GM12878 (cell line): ENCODE measurements at regions of chr14 and their contacts with region 1.

Region 1: GRCh38 chr14:68816262-68816942 is 23.5 kb upstream of the ZFP36L1 start:
- DNase-seq: no peak
- ATAC-seq: peak; percentile 64
- H3K4me3 ChIP-seq: peak overlapping the region; percentile 58
- H3K27ac ChIP-seq: peak overlapping the region; percentile 95
- H3K4me1 ChIP-seq: peaks cover 58% of the 10 kb centered on the region
- H3K27me3 ChIP-seq: no peaks in the 10 kb centered on the region
- CTCF ChIP-seq: peak; percentile 89 to 99 (median 92); a peak in 5 of 6 replicates
- EP300 ChIP-seq: 0 out of 4 replicates have a peak, but pooled peaks of 1 of the 2 experiments have one; percentile 12
- POLR2A ChIP-seq: peak; percentile 80
- RAD21 ChIP-seq: peak; percentile 92

Region 2: GRCh38 chr14:68261092-68261842 is 555.1 kb before region 1 on chr14:
- CTCF ChIA-PET with region 1: interaction called, 3 read pairs
- POLR2A ChIA-PET with region 1: no interaction called
- RAD21 ChIA-PET with region 1: interaction called, 292 read pairs
- SMC1A ChIA-PET with region 1: interaction called, 314 read pairs
- in situ Hi-C with region 1: no loop called
- intact Hi-C with region 1: no loop called
- DNase-seq: no peak
- ATAC-seq: peak; percentile 60
- H3K4me3 ChIP-seq: peak overlapping the region; percentile 40; the same call in 1 of the 2 replicates
- H3K27ac ChIP-seq: peak overlapping the region; percentile 58
- H3K4me1 ChIP-seq: peaks cover 45% of the 10 kb centered on the region
- H3K27me3 ChIP-seq: no peaks in the 10 kb centered on the region
- CTCF ChIP-seq: no peak
- EP300 ChIP-seq: no peak
- POLR2A ChIP-seq: no peak
- RAD21 ChIP-seq: no peak

Region 3: DNA sequence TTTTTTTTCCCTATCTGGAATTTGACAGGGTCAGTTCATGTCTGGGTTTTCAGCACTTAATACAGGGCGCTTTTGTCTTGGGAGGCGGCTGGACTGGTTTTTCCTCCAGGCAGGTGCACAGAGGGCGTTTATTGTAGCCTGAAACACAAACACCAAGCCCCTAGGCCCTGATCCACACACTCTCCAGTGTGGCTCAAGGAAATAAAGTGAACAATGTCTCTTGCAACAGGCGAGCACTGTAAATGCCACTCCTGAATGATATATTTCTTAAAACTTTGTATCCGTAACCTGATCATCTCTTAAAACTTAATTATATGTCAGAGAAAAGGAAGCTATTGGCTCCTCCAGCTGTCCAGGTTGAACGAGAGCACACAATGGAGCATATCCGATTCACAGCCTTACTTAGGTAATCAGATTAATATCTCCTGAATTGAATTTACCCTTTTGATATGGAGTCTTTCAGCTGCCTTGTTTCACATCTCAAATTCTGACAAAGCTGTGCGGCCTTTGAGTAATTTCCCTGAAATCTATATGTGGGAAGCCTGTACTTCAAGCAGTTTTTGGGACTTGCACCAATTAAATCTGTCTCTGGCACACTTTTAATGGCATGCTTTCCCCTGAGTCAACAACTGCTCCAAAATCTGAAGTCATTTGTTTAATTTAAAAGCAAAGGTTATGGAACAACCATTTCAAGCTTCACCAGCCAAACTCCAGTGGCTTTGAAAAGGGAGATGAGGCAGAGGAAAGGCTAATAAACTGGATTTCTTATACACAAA is 509.2 kb before region 1 on chr14:
- CTCF ChIA-PET with region 1: interaction called, 4 read pairs
- POLR2A ChIA-PET with region 1: interaction called, 4 read pairs
- RAD21 ChIA-PET with region 1: interaction called, 6 read pairs
- SMC1A ChIA-PET with region 1: interaction called, 25 read pairs
- in situ Hi-C with region 1: no loop called
- intact Hi-C with region 1: no loop called
- DNase-seq: no peak
- ATAC-seq: no peak
- H3K4me3 ChIP-seq: no peak overlapping the region; the same call in 1 of the 2 replicates
- H3K27ac ChIP-seq: peak overlapping the region; percentile 98
- H3K4me1 ChIP-seq: peaks cover 53% of the 10 kb centered on the region
- H3K27me3 ChIP-seq: no peaks in the 10 kb centered on the region
- CTCF ChIP-seq: no peak
- EP300 ChIP-seq: no peak
- POLR2A ChIP-seq: no peak
- RAD21 ChIP-seq: no peak

Region 4: GRCh38 chr14:68408680-68409079 is 407.7 kb before region 1 on chr14:
- CTCF ChIA-PET with region 1: interaction called, 12 read pairs
- POLR2A ChIA-PET with region 1: interaction called, 11 read pairs
- RAD21 ChIA-PET with region 1: interaction called, 101 read pairs
- SMC1A ChIA-PET with region 1: interaction called, 52 read pairs
- in situ Hi-C with region 1: no loop called
- intact Hi-C with region 1: no loop called
- DNase-seq: no peak
- ATAC-seq: peak; percentile 42
- H3K4me3 ChIP-seq: no peak overlapping the region
- H3K27ac ChIP-seq: no peak overlapping the region
- H3K4me1 ChIP-seq: peaks cover 39% of the 10 kb centered on the region
- H3K27me3 ChIP-seq: no peaks in the 10 kb centered on the region
- CTCF ChIP-seq: peak; percentile 25 to 54 (median 33); a peak in 5 of 6 replicates
- EP300 ChIP-seq: no peak
- POLR2A ChIP-seq: no peak
- RAD21 ChIP-seq: peak; percentile 67

Region 5: GRCh38 chr14:68695326-68695768 is 121.1 kb before region 1 on chr14:
- CTCF ChIA-PET with region 1: no interaction called
- POLR2A ChIA-PET with region 1: no interaction called
- RAD21 ChIA-PET with region 1: no interaction called
- SMC1A ChIA-PET with region 1: no interaction called
- in situ Hi-C with region 1: no loop called
- intact Hi-C with region 1: no loop called
- DNase-seq: peak; percentile 80
- ATAC-seq: peak; percentile 98
- H3K4me3 ChIP-seq: no peak overlapping the region
- H3K27ac ChIP-seq: no peak overlapping the region
- H3K4me1 ChIP-seq: peaks cover 18% of the 10 kb centered on the region
- H3K27me3 ChIP-seq: no peaks in the 10 kb centered on the region
- CTCF ChIP-seq: no peak
- EP300 ChIP-seq: peak; percentile 79 to 86
- POLR2A ChIP-seq: no peak
- RAD21 ChIP-seq: peak; percentile 25; the same call in 1 of the 2 replicates

Region 6: GRCh38 chr14:68795597-68796417 is 20.6 kb before region 1 on chr14:
- CTCF ChIA-PET with region 1: interaction called, 254 read pairs
- POLR2A ChIA-PET with region 1: interaction called, 115 read pairs
- RAD21 ChIA-PET with region 1: interaction called, 244 read pairs
- SMC1A ChIA-PET with region 1: interaction called, 200 read pairs
- in situ Hi-C with region 1: no loop called
- intact Hi-C with region 1: loop called (anchors 1 kb)
- DNase-seq: no peak
- ATAC-seq: peak; percentile 62
- H3K4me3 ChIP-seq: peak overlapping the region; percentile 97
- H3K27ac ChIP-seq: peak overlapping the region; percentile 100
- H3K4me1 ChIP-seq: peaks cover 18% of the 10 kb centered on the region
- H3K27me3 ChIP-seq: no peaks in the 10 kb centered on the region
- CTCF ChIP-seq: peak; percentile 46 to 74 (median 59); a peak in 5 of 6 replicates
- EP300 ChIP-seq: peak in 1 of 2 experiments; percentile 62; a peak in 3 of 4 replicates
- POLR2A ChIP-seq: peak; percentile 97
- RAD21 ChIP-seq: peak; percentile 43; the same call in 1 of the 2 replicates

Region 7: GRCh38 chr14:69101331-69101826 is 285.0 kb after region 1 on chr14:
- CTCF ChIA-PET with region 1: no interaction called
- POLR2A ChIA-PET with region 1: no interaction called
- RAD21 ChIA-PET with region 1: no interaction called
- SMC1A ChIA-PET with region 1: no interaction called
- in situ Hi-C with region 1: no loop called
- intact Hi-C with region 1: no loop called
- DNase-seq: no peak
- ATAC-seq: peak; percentile 84
- H3K4me3 ChIP-seq: no peak overlapping the region
- H3K27ac ChIP-seq: no peak overlapping the region
- H3K4me1 ChIP-seq: no peaks in the 10 kb centered on the region
- H3K27me3 ChIP-seq: no peaks in the 10 kb centered on the region
- CTCF ChIP-seq: peak; percentile 34 to 43 (median 37); a peak in 5 of 6 replicates
- EP300 ChIP-seq: no peak
- POLR2A ChIP-seq: no peak
- RAD21 ChIP-seq: peak; percentile 38

Region 8: DNA sequence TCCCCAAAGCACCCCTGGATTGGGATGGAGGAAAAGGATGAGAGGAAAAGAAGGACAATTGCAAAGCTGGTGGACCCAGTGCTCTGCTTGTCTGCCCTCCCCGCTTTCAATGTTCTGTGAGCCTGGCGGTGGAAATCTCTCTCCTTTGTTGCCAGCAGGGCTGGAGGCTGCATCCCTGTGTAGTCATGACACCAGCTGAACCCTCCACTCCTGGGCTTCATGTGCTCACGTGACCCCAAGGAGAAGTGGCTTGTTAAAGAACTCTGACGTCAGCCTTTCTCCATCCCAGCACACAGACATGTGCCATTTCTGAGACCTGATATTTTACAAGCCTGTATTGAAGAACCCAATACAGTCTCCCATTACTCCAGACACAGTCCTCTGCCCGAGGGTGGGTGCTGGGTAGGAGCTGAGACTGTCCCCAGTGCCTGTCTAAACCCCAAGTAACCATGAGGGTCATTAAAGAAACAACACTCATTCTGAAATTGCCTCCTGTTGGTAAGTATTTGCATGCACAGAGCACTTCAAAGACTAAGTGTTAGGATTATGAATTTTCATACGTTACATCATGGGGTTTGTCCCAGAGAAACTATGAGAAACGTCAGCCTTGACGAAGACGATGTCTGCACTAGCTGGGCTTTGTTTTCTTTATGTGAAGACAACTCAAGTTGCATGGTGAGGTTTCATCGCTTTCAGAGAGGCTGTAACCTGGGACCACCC is 465.2 kb after region 1 on chr14:
- CTCF ChIA-PET with region 1: no interaction called
- POLR2A ChIA-PET with region 1: no interaction called
- RAD21 ChIA-PET with region 1: no interaction called
- SMC1A ChIA-PET with region 1: no interaction called
- in situ Hi-C with region 1: no loop called
- intact Hi-C with region 1: no loop called
- DNase-seq: no peak
- ATAC-seq: peak; percentile 98
- H3K4me3 ChIP-seq: no peak overlapping the region
- H3K27ac ChIP-seq: no peak overlapping the region
- H3K4me1 ChIP-seq: peaks cover 3% of the 10 kb centered on the region; the same call in 1 of the 2 replicates
- H3K27me3 ChIP-seq: no peaks in the 10 kb centered on the region
- CTCF ChIP-seq: no peak
- EP300 ChIP-seq: peak; percentile 24 to 92; a peak in 3 of 4 replicates
- POLR2A ChIP-seq: no peak
- RAD21 ChIP-seq: 0 out of 2 replicates have a peak, but pooled peaks have one; percentile 9